Endothelial cell of umbilical vein (primary cell): ENCODE measurements at regions of chr20 and their contacts with region 1.

Region 1: DNA sequence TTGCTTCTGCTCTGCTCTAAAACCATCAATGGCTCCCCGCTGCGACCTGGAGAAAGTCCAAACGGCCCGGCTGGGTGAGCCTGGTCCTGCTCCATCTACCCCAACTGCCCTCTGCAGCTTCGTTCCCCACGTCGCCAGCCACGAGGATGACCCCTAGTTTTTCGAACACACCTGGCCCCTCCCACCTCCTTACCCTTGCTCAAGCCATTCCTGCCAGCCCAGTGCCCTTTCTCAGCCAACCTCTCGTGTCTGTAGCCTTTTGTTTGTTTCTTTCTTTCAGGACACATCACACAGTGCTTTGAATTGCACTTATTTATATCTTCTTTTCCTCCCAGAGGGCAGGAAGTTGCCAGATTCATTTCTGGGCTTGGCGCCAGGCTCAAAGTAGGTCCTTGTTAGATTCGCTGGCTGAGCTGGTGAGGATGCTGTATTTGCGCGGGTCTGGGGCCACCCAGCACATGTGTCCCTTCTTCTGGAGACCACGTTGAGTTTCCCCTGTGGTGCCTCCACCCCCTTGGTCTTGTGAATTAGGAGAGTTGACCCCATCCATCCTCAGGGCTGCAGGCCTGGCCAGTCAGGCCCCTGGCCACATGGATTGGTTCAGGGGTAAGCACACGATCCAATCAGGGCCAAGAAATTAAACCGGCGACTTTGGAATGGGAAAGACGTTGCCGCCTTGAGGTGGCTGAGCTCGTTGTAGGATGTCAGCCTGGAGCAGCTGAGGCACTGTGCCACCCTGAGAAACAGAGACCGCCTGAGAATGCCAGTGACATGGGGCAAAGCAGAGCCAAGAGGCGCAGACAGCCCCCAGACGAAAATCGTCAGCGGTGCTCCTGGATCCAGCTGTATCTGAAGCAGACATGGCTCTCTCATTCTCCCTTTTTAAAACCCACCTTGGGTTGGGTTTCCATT is 156.0 kb downstream of the CEBPB start:
- DNase-seq: peak; percentile 81
- H3K4me3 ChIP-seq: no peak overlapping the region
- H3K27ac ChIP-seq: no peak overlapping the region
- H3K4me1 ChIP-seq: peaks cover 21% of the 10 kb centered on the region
- H3K27me3 ChIP-seq: peaks cover 0 to 5% of the 10 kb centered on the region in 2 experiments
- CTCF ChIP-seq: no peak
- POLR2A ChIP-seq: no peak

Region 2: GRCh38 chr20:50366270-50367103 is 19.9 kb after region 1 on chr20:
- CTCF ChIA-PET with region 1: interaction called, 3 read pairs
- POLR2A ChIA-PET with region 1: no interaction called
- dilution Hi-C with region 1: no loop called
- intact Hi-C with region 1: loop called (anchors 2 kb)
- DNase-seq: peak; percentile 86
- H3K4me3 ChIP-seq: no peak overlapping the region
- H3K27ac ChIP-seq: no peak overlapping the region
- H3K4me1 ChIP-seq: peaks cover 5% of the 10 kb centered on the region
- H3K27me3 ChIP-seq: peaks cover 31% of the 10 kb centered on the region in 2 experiments
- CTCF ChIP-seq: no peak
- POLR2A ChIP-seq: no peak